Heart right ventricle (tissue), 16 donors: ENCODE measurements at regions of chr13 and their contacts with region 1.

Region 1: GRCh38 chr13:47076500-47076899 is 179.6 kb upstream of the HTR2A start:
- DNase-seq: no peak
- ATAC-seq: no peak
- H3K4me3 ChIP-seq: no peak overlapping the region
- H3K27ac ChIP-seq: no peak overlapping the region
- H3K4me1 ChIP-seq: no peaks in the 10 kb centered on the region
- H3K27me3 ChIP-seq: no peaks in the 10 kb centered on the region
- CTCF ChIP-seq: no peak

Region 2: GRCh38 chr13:47114030-47114429 is 37.5 kb after region 1 on chr13:
- intact Hi-C with region 1: loop called in 1 of 10 experiments (anchors 5 kb)
- DNase-seq: no peak
- ATAC-seq: no peak
- H3K4me3 ChIP-seq: no peak overlapping the region
- H3K27ac ChIP-seq: no peak overlapping the region
- H3K4me1 ChIP-seq: no peaks in the 10 kb centered on the region
- H3K27me3 ChIP-seq: peaks cover 0 to 4% (median 0%) of the 10 kb centered on the region in 7 donors
- CTCF ChIP-seq: no peak

Region 3: GRCh38 chr13:47372742-47373141 is 296.2 kb after region 1 on chr13:
- intact Hi-C with region 1: no loop called
- DNase-seq: no peak
- ATAC-seq: no peak
- H3K4me3 ChIP-seq: no peak overlapping the region
- H3K27ac ChIP-seq: no peak overlapping the region
- H3K4me1 ChIP-seq: no peaks in the 10 kb centered on the region
- H3K27me3 ChIP-seq: no peaks in the 10 kb centered on the region
- CTCF ChIP-seq: no peak